Mammary epithelial cell (primary cell): ENCODE measurements at regions of chr6 and their contacts with region 1.

Region 1: DNA sequence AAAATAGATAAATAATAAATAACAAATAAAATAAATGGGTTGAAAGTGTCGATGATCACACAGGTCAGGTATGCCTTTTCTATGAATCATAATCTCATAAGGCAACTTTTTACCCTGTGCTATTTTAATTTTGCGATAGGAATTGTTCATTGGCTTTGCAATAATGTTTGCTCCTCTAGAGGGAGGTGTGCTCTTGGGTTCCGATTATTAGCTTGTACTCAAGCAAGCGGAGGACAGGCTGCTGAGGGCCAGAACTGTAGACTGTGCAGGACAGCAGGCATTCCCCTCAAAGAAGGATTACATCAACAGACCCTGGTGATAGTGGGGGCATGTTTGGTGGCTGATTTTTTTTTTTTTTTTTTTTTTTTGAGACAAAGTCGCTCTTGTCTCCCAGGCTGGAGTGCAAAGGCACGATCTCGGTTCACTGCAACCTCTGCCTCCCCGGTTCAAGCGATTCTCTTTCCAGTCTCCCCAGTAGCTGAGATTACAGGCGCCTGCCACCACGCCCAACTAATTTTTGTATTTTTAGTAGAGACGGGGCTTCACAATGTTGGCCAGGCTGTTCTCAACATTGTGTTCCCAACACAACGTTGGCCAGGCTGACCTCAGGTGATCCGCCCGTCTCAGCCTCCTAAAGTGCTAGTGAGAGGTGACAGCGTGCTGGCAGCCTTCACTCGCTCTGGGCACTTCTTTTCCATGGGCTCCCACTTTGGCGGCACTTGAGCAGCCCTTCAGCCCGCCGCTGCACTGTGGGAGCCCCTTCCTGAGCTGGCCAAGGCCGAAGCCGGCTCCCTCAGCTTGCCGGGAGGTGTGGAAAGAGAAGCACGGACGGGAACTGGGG is 35.6 kb downstream of the RIOK1 start:
- DNase-seq: peak; percentile 86
- H3K4me3 ChIP-seq: no peak overlapping the region
- H3K27ac ChIP-seq: no peak overlapping the region
- H3K4me1 ChIP-seq: no peaks in the 10 kb centered on the region
- H3K27me3 ChIP-seq: no peaks in the 10 kb centered on the region
- CTCF ChIP-seq: peak; percentile 56 to 78

Region 2: GRCh38 chr6:7479801-7480266 is 54.6 kb after region 1 on chr6:
- CTCF ChIA-PET with region 1: no interaction called
- dilution Hi-C with region 1: no loop called
- in situ Hi-C with region 1: no loop called
- intact Hi-C with region 1: loop called (anchors 1 kb)
- DNase-seq: peak; percentile 100
- H3K4me3 ChIP-seq: no peak overlapping the region
- H3K27ac ChIP-seq: peak overlapping the region; percentile 94
- H3K4me1 ChIP-seq: peaks cover 7% of the 10 kb centered on the region
- H3K27me3 ChIP-seq: no peaks in the 10 kb centered on the region
- CTCF ChIP-seq: no peak

Region 3: DNA sequence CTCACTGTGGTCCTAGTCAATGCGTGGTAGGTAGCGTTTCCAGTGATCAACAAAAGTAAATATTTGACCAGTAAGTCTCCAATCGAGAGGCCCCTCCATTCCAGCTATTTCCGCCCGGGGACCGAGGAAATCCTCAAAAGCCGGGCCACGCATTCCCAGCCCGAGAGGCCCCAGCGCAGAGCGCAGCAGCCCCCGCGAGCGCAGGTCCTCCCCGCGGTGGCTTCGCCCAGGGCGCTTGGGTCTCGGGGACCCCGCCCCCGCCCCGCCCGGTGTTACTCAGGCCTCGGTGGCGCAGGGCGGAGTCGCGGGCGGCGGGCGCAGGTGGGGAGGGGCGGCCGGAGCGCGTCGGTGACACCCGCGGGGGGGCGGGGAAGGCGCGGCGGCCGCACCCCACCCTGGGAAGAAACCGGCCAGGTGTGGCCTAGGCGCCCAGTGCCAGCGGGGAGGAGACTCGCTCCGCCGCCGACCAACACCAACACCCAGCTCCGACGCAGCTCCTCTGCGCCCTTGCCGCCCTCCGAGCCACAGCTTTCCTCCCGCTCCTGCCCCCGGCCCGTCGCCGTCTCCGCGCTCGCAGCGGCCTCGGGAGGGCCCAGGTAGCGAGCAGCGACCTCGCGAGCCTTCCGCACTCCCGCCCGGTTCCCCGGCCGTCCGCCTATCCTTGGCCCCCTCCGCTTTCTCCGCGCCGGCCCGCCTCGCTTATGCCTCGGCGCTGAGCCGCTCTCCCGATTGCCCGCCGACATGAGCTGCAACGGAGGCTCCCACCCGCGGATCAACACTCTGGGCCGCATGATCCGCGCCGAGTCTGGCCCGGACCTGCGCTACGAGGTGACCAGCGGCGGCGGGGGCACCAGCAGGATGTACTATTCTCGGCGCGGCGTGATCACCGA is 116.2 kb after region 1 on chr6 and contains the start of gene DSP:
- CTCF ChIA-PET with region 1: interaction called, 17 read pairs
- dilution Hi-C with region 1: no loop called
- in situ Hi-C with region 1: loop called in 1 of 2 experiments (anchors 5 kb)
- intact Hi-C with region 1: loop called (anchors 1 kb)
- DNase-seq: peak; percentile 93
- H3K4me3 ChIP-seq: peak within 1 kb of the TSS; percentile 92 to 99 (median 98)
- H3K27ac ChIP-seq: peak within 1 kb of the TSS; percentile 92
- H3K4me1 ChIP-seq: peaks cover 24% of the 10 kb centered on the region
- H3K27me3 ChIP-seq: no peaks in the 10 kb centered on the region
- CTCF ChIP-seq: no peak
- total RNA-seq, gene DSP: 397 to 468 TPM

Region 4: GRCh38 chr6:7550433-7550801 is 125.2 kb after region 1 on chr6:
- CTCF ChIA-PET with region 1: no interaction called
- dilution Hi-C with region 1: loop called (anchors 25 kb)
- in situ Hi-C with region 1: loop called (anchors 5 to 10 kb)
- intact Hi-C with region 1: loop called (anchors 1 kb)
- DNase-seq: peak; percentile 79
- H3K4me3 ChIP-seq: peak overlapping the region in 1 of 3 experiments; percentile 5
- H3K27ac ChIP-seq: peak overlapping the region; percentile 78
- H3K4me1 ChIP-seq: peaks cover 78% of the 10 kb centered on the region
- H3K27me3 ChIP-seq: no peaks in the 10 kb centered on the region
- CTCF ChIP-seq: no peak

Region 5: GRCh38 chr6:7561153-7561964 is 136.2 kb after region 1 on chr6:
- CTCF ChIA-PET with region 1: no interaction called
- dilution Hi-C with region 1: loop called (anchors 25 kb)
- in situ Hi-C with region 1: loop called (anchors 5 to 10 kb)
- intact Hi-C with region 1: loop called (anchors 1 kb)
- DNase-seq: peak; percentile 89
- H3K4me3 ChIP-seq: peak overlapping the region in 1 of 3 experiments; percentile 0
- H3K27ac ChIP-seq: peak overlapping the region; percentile 88
- H3K4me1 ChIP-seq: peaks cover 37% of the 10 kb centered on the region
- H3K27me3 ChIP-seq: no peaks in the 10 kb centered on the region
- CTCF ChIP-seq: no peak

Region 6: DNA sequence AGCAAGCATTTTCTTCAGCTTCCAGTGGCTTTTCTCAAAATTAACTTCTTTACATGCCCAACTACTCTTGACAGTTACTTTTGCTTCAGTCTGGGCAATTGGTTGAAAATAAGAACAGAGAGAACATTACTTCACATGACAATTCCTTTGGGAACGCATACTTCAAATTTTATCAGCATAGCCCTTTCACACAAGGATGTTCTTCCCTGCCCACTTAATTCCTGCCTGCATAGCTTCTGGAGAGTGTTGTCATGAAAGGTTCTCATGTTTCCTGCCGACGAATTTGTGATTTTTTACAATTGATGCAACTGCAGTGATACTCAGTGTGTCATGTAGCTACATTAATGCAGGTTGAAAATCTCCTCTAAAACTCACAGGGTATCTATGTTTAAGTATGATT is 142.8 kb after region 1 on chr6:
- CTCF ChIA-PET with region 1: no interaction called
- dilution Hi-C with region 1: loop called (anchors 25 kb)
- in situ Hi-C with region 1: loop called in 1 of 2 experiments (anchors 5 kb)
- intact Hi-C with region 1: no loop called
- DNase-seq: no peak
- H3K4me3 ChIP-seq: no peak overlapping the region
- H3K27ac ChIP-seq: no peak overlapping the region
- H3K4me1 ChIP-seq: no peaks in the 10 kb centered on the region
- H3K27me3 ChIP-seq: no peaks in the 10 kb centered on the region
- CTCF ChIP-seq: no peak